ENCODE measurements at regions of chr1 and their contacts with region 1.

Region 1: DNA sequence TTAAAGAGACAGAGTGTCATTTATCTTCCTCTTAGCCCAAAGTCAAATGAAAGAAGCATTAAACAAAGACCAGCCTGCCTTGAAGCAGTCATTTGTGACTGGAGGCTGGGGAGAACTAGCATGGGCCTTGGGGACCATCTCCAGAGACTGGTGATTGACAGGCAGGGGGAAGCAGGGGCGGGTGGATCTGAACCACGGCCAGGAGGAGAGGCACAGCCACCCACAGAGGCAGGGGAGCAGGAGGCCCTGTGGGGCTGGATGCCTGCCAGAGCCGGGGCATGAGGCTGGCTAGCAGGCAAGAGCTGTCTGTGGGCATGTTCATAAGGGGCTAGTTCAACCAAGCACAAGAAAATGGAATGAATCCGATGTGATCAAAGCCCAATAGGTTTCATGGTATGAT is 73.9 kb downstream of the PLXNA2 start:
- DNase-seq: no peak
- H3K4me3 ChIP-seq: no peak overlapping the region
- H3K27ac ChIP-seq: no peak overlapping the region
- H3K4me1 ChIP-seq: peaks cover 17% of the 10 kb centered on the region
- H3K27me3 ChIP-seq: no peaks in the 10 kb centered on the region
- CTCF ChIP-seq: no peak
- POLR2A ChIP-seq: no peak

Region 2: GRCh38 chr1:208036109-208036808 is 134.0 kb before region 1 on chr1:
- CTCF ChIA-PET with region 1: no interaction called
- POLR2A ChIA-PET with region 1: no interaction called
- dilution Hi-C with region 1: no loop called
- intact Hi-C with region 1: no loop called
- DNase-seq: no peak
- H3K4me3 ChIP-seq: no peak overlapping the region
- H3K27ac ChIP-seq: no peak overlapping the region
- H3K4me1 ChIP-seq: peaks cover 19% of the 10 kb centered on the region
- H3K27me3 ChIP-seq: no peaks in the 10 kb centered on the region
- CTCF ChIP-seq: peak in 1 of 2 donors; percentile 4
- POLR2A ChIP-seq: no peak

Region 3: DNA sequence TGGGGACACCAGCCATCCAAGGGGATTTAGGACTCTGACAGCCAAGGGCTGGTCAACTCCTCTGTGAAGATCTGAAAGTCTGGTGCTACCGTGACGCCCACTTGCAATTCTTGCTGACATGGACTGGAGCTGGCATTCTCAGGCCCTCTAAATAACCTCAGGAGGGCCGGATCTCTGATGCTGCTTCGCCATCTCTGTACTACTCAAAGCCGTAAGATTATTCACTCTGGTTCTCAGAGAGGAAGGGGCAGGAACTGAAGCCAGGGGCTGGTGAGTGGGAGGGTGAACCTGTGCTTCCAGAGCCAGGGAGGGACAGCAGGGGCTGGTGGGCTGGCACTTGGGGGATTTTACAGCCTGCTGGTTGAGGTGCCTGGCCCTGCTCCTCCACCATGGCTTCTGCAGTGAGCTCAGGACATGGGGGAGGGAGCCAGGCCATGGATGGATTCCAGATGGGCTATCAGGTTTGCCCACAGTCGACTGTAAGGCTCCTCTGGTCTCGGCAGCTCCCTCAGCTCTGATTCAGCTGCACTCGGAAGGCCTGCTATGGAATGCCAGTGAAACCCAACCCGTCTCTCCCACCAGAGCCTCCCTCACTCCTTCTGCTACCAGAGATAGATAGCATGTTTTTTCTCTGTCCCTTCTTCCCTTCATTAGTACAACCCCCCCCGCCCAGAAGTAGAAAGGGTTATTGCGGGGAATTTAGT is 10.5 kb before region 1 on chr1:
- CTCF ChIA-PET with region 1: interaction called, 10 read pairs
- POLR2A ChIA-PET with region 1: no interaction called
- dilution Hi-C with region 1: no loop called
- intact Hi-C with region 1: loop called (anchors 2 kb)
- DNase-seq: peak; percentile 41
- H3K4me3 ChIP-seq: no peak overlapping the region
- H3K27ac ChIP-seq: peak overlapping the region; percentile 27
- H3K4me1 ChIP-seq: peaks cover 54% of the 10 kb centered on the region
- H3K27me3 ChIP-seq: no peaks in the 10 kb centered on the region
- CTCF ChIP-seq: no peak
- POLR2A ChIP-seq: no peak

Region 4: DNA sequence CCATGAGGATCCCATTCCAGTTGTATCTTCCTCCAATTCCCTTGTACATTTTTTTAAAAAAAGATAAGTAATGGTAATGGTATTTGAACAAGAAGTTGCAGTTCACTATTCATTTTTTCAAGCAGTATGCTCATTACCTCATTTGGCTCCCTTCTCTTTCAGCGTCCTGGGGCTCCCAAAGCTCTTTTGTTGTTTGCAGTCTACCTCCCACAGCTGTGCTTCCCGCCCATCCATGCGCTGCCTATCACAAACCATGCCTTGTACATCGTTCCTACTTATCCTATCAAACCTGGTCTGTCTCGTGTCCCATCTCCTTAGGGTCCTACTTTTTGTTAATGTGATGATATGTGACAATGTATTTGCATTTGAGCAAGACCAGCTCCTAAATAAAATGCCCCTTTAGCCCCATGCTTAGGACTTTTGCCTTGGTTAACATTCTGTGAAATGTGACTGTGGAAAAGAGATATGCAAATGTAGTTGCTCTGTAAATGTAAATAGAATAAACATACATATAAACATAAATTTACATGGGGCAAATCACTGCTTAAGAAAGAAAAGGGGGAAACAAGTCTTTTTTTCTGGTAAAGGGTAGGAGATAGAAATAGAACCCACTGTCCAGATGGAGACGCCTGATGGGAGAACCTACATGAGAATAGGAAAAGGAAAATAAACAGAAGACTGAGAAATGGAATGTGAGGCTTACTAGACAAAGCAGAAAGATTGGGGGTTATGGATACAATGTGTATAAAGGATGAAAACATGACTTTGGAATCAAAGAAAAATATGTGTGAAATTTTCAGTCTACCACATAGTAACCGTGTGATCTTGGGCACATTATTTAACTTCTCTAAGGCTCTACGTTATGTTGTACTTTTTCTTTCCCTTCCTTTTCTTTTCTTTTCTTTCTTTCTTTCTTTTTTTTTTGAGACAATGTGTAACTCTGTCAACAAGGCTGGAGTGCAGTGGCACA is 133.8 kb after region 1 on chr1:
- CTCF ChIA-PET with region 1: no interaction called
- POLR2A ChIA-PET with region 1: no interaction called
- dilution Hi-C with region 1: no loop called
- intact Hi-C with region 1: no loop called
- DNase-seq: no peak
- H3K4me3 ChIP-seq: no peak overlapping the region
- H3K27ac ChIP-seq: no peak overlapping the region
- H3K4me1 ChIP-seq: no peaks in the 10 kb centered on the region
- H3K27me3 ChIP-seq: peaks cover 4 to 5% of the 10 kb centered on the region in 2 experiments
- CTCF ChIP-seq: no peak
- POLR2A ChIP-seq: no peak